ENCODE measurements at regions of chr3 and their contacts with region 1.

Region 1: DNA sequence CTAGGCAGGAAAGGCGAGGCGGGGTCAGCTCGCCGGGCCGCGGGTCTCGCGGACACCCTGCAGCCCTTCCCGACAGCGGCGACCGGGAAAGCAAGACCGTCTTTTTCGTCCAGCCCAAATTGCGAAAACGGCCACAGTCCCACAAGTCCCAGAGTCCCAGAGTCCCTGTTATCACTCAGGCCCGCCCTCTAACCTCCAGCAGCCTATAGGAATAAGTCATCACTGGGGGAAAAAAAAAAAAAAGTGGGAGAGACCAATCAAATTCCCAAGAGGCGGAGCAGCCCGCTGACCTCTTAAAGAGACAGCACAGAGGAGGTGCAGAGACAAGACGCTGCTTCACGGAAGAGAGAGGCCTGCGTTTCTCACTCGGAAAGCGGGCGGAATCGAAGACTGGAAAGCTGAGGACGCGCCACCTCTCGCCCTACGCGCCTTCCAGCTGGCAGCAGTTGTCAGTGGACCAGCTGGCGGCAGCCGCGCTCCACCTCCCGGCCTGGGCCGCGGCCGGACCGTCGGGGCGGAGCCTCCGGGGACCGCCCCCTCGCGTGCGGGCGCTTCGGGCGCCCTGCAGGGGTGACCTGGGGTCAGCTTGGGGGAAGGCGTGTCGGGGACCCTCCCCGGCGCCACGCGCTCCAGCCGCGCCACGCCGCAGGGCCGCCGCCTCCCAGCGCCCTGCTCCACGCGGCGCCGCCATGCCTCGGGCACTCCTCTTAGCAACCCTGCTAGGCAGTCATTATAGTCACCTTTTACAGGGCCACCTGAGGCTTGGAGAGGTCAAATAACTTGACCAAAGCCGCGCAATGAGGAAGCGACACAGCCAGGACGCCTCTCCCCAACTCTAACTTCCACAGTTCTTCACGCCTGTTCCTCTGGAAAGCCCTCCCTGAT is at the start of gene TPRA1:
- DNase-seq: peak; percentile 91 to 95
- ATAC-seq: peak; percentile 94 to 97
- H3K4me3 ChIP-seq: peak within 1 kb of the TSS; percentile 71 to 92 (median 76)
- H3K27ac ChIP-seq: peak within 1 kb of the TSS; percentile 88 to 96 (median 92)
- H3K4me1 ChIP-seq: peaks cover 26 to 32% of the 10 kb centered on the region in 2 donors
- H3K27me3 ChIP-seq: no peaks in the 10 kb centered on the region
- CTCF ChIP-seq: peak in 2 of 5 experiments; percentile 27 to 47
- POLR2A ChIP-seq: peak; percentile 56 to 78
- total RNA-seq, gene TPRA1: 29.2 to 42.1 (median 31.1) TPM

Region 2: DNA sequence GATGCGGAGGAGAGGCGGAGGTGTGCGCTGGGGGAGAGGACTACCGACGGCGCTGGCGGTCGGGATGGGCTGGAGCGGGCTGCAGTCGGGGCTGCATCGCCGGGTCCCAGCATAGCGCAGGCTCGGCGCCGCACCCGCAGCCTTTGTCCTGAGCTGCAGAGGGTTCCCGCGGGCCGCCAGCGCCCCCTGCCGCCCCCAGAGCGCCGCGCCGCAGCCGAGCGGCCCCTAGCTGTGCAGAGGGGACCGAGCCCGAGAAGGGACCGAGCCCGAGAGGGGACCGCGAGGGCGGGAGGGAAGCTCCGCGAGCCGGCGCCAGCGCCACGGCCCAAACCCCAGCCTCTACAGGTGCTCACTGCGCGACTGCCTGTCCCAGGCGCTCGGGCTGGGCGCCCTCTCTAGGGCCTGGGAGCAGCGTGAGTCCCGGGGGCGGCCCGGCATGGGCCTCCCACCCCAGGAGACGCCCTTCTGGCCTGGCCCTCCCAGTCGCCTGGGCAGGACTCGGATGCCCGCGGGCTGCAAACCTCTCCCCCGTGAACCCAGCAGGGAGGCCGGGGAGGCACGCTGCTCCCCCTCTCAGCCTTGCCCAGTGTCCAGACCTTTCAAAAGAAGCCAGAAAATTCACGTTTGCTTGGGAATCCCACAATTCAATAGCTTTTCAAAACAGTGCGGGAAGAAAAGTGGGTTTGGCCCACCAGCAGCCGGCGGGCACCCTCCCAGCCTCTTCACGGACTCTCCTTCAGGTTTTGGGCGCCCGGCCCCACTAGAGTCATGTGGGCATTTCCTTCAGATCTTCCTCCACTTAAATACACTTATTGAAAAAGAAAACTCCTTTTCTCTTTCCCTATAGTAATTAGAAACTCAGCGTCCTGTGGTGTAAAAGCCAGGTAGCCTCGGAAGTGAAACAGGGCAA is 135.0 kb before region 1 on chr3:
- in situ Hi-C with region 1: no loop called
- intact Hi-C with region 1: no loop called
- DNase-seq: peak in 1 of 2 donors; percentile 30
- ATAC-seq: peak; percentile 72 to 77
- H3K4me3 ChIP-seq: peak overlapping the region in 2 of 4 donors; percentile 28 to 36
- H3K27ac ChIP-seq: no peak overlapping the region
- H3K4me1 ChIP-seq: peaks cover 4 to 6% of the 10 kb centered on the region in 2 donors
- H3K27me3 ChIP-seq: peaks cover 32 to 44% (median 42%) of the 10 kb centered on the region in 3 donors
- CTCF ChIP-seq: peak; percentile 57 to 83 (median 73)
- POLR2A ChIP-seq: no peak

Region 3: DNA sequence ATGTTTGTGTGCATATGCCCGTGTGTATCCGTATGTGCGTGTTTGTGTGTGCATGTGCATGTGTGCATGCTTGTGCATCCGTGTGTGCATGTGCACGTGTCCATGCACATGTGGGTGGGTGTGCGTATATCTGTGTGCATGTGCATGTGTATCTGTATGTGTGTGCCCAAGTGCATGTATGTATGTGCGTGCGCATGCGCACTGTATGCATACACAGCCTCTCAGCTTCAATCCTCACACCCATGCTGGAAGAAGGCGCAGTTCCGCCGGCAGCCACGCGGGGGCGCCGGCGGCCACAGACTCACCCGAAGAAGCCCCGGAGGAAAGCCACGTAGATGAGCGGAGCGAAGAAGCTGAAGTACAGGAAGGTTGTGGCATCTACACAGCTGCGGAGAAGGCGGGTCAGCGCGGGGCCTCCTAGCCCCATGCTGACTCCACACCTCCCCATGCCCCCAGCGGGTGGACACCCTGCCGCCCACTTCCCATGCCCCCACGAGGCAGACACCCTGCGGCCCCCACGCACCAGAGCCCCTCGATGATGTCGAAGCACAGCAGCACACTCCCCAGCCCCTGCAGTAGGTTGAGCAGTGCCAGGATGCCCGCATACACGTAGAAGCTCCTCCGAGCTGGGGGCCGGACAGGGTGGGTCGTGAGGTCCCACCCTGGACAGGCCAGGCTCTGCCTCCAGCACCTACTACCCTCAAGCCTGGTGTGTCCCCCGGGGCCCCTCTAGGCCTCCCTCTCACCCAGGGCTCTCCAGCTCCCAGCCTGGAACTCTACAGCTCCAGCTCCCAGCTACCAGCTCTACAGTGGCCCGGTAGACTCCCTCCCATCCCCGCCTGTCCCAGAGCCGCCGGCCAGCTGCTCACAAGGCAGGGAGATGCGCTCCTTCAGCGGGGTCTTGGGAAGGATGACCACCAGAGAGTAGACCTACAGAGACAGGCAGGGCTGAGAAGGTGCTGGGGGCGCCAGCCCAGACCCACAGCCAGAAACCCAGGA is 15.7 kb before region 1 on chr3:
- in situ Hi-C with region 1: no loop called
- intact Hi-C with region 1: loop called (anchors 1 kb)
- DNase-seq: peak; percentile 61 to 85
- ATAC-seq: peak; percentile 92 to 97
- H3K4me3 ChIP-seq: no peak overlapping the region
- H3K27ac ChIP-seq: no peak overlapping the region
- H3K4me1 ChIP-seq: peaks cover 0 to 6% of the 10 kb centered on the region in 2 donors
- H3K27me3 ChIP-seq: no peaks in the 10 kb centered on the region
- CTCF ChIP-seq: peak; percentile 94 to 98 (median 96)
- POLR2A ChIP-seq: no peak

Region 4: GRCh38 chr3:127628788-127629466 is 38.1 kb after region 1 on chr3 and contains the start of gene PODXL2:
- in situ Hi-C with region 1: no loop called
- intact Hi-C with region 1: loop called (anchors 1 kb)
- DNase-seq: peak in 1 of 2 donors; percentile 27
- ATAC-seq: peak; percentile 75 to 86
- H3K4me3 ChIP-seq: peak within 1 kb of the TSS; percentile 41 to 67 (median 54)
- H3K27ac ChIP-seq: no peak within 1 kb of the TSS
- H3K4me1 ChIP-seq: peaks cover 5 to 8% of the 10 kb centered on the region in 2 donors
- H3K27me3 ChIP-seq: no peaks in the 10 kb centered on the region
- CTCF ChIP-seq: no peak
- POLR2A ChIP-seq: no peak
- total RNA-seq, gene PODXL2: 1.5 to 3.2 (median 2.0) TPM

Region 5: DNA sequence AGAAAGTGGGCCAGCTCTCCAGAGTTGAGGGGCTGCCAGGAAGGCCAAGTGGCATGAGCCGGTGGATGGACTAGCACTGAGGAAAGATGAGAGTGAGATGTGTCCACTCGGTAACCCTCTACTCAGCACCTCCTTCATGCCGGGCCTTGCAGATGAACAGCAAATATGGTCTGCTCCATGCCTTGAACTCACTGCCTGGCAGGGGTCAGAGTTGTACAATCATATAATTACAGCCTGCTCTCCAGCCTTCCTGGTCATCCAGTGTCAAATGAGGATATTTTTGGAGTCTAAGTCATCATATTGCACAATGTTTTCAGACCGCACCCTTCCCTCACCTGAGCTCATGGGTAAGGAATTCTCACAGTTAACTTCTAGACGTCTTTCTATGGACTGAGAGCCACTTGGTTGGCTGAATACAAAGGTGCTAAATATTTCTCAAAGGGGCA is 226.6 kb after region 1 on chr3:
- in situ Hi-C with region 1: no loop called
- intact Hi-C with region 1: loop called (anchors 1 kb)
- DNase-seq: peak; percentile 53 to 73
- ATAC-seq: peak; percentile 97 to 98
- H3K4me3 ChIP-seq: no peak overlapping the region
- H3K27ac ChIP-seq: peak overlapping the region; percentile 80 to 92 (median 84)
- H3K4me1 ChIP-seq: peaks cover 74 to 89% of the 10 kb centered on the region in 2 donors
- H3K27me3 ChIP-seq: no peaks in the 10 kb centered on the region
- CTCF ChIP-seq: no peak
- POLR2A ChIP-seq: no peak

Measured in gastrocnemius medialis (tissue), 4 donors.